Heart left ventricle (tissue), 16 donors: ENCODE measurements at regions of chr1 and their contacts with region 1.

Region 1: GRCh38 chr1:225652729-225653462 is at the start of gene ENAH:
- DNase-seq: peak; percentile 88 to 91 (median 89)
- ATAC-seq: peak; percentile 68 to 93 (median 87)
- H3K4me3 ChIP-seq: peak within 1 kb of the TSS; percentile 80 to 99 (median 92)
- H3K27ac ChIP-seq: peak within 1 kb of the TSS; percentile 92 to 100 (median 96)
- H3K4me1 ChIP-seq: peaks cover 0 to 65% (median 37%) of the 10 kb centered on the region in 12 donors
- H3K27me3 ChIP-seq: peaks cover 0 to 6% (median 0%) of the 10 kb centered on the region in 9 donors
- CTCF ChIP-seq: no peak
- POLR2A ChIP-seq: peak; percentile 28 to 54
- total RNA-seq, gene ENAH: 54.3 to 183 (median 97.6) TPM

Region 2: DNA sequence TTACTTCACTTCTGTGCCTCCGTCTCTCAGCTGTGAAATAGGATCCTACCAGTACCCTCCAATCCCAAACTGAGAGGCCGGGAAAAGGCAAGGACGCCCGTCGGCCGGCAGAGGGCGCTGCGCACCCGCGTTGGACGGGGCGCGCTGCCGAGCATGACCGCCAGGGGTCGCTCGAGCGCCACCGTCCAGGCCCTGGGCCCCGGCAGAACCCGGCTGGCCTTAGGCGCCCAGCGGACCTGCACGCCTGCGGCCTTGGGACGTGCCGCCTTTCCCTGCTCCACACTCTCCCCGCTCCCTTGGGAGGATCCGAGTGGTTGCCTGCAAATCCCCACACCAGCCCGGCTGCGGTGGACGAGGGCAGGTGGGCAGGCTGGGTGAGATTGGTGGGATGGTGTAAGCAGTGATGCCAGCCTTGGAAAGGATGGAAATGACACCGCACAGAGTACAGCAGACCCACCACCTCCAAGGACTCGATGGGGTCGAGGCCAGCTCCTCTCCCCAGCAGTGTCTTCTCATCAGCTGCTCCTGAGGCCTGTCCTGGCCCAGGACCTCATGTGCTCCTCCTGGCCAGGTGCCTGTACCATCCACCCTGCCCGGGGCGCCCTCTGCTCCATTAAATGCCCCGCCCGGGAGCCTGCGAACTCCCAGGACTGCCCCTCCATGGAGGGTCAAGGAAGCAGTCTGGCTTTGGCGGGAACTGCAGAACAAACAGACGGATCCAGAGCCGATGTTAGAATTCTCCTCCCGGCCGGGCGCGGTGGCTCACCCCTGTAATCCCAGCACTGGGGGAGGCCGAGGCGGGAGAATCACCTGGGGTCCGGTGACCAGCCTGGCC is 177.7 kb before region 1 on chr1:
- intact Hi-C with region 1: loop called in 6 of 10 experiments (anchors 5 to 10 kb)
- DNase-seq: peak; percentile 62 to 88 (median 66)
- ATAC-seq: peak; percentile 69 to 91 (median 88)
- H3K4me3 ChIP-seq: peak overlapping the region in 5 of 12 donors; percentile 10 to 35 (median 26)
- H3K27ac ChIP-seq: peak overlapping the region in 1 of 12 donors; percentile 13
- H3K4me1 ChIP-seq: peaks cover 0 to 11% (median 5%) of the 10 kb centered on the region in 12 donors
- H3K27me3 ChIP-seq: no peaks in the 10 kb centered on the region
- CTCF ChIP-seq: peak in 11 of 12 donors; percentile 100
- POLR2A ChIP-seq: no peak

Region 3: GRCh38 chr1:225554216-225554812 is 98.6 kb before region 1 on chr1:
- intact Hi-C with region 1: loop called in 2 of 10 experiments (anchors 5 to 10 kb)
- DNase-seq: no peak
- ATAC-seq: peak in 1 of 4 donors; percentile 43
- H3K4me3 ChIP-seq: no peak overlapping the region
- H3K27ac ChIP-seq: no peak overlapping the region
- H3K4me1 ChIP-seq: peaks cover 0 to 24% (median 5%) of the 10 kb centered on the region in 12 donors
- H3K27me3 ChIP-seq: no peaks in the 10 kb centered on the region
- CTCF ChIP-seq: peak; percentile 39 to 73 (median 60)
- POLR2A ChIP-seq: no peak

Region 4: GRCh38 chr1:225578251-225578950 is 74.5 kb before region 1 on chr1:
- intact Hi-C with region 1: loop called in 6 of 10 experiments (anchors 5 to 10 kb)
- DNase-seq: no peak
- ATAC-seq: no peak
- H3K4me3 ChIP-seq: no peak overlapping the region
- H3K27ac ChIP-seq: peak overlapping the region in 6 of 12 donors; percentile 2 to 69 (median 14)
- H3K4me1 ChIP-seq: peaks cover 0 to 66% (median 37%) of the 10 kb centered on the region in 12 donors
- H3K27me3 ChIP-seq: no peaks in the 10 kb centered on the region
- CTCF ChIP-seq: no peak
- POLR2A ChIP-seq: no peak

Region 5: GRCh38 chr1:225694151-225694603 is 41.3 kb after region 1 on chr1:
- intact Hi-C with region 1: loop called in 2 of 10 experiments (anchors 5 kb)
- DNase-seq: peak in 4 of 5 donors; percentile 41 to 65 (median 54)
- ATAC-seq: peak; percentile 90 to 98 (median 94)
- H3K4me3 ChIP-seq: no peak overlapping the region
- H3K27ac ChIP-seq: peak overlapping the region in 9 of 12 donors; percentile 14 to 78 (median 52)
- H3K4me1 ChIP-seq: peaks cover 0 to 76% (median 37%) of the 10 kb centered on the region in 12 donors
- H3K27me3 ChIP-seq: no peaks in the 10 kb centered on the region
- CTCF ChIP-seq: no peak
- POLR2A ChIP-seq: no peak

Region 6: GRCh38 chr1:225712391-225712790 is 59.5 kb after region 1 on chr1:
- intact Hi-C with region 1: no loop called
- DNase-seq: no peak
- ATAC-seq: no peak
- H3K4me3 ChIP-seq: no peak overlapping the region
- H3K27ac ChIP-seq: no peak overlapping the region
- H3K4me1 ChIP-seq: no peaks in the 10 kb centered on the region
- H3K27me3 ChIP-seq: no peaks in the 10 kb centered on the region
- CTCF ChIP-seq: no peak
- POLR2A ChIP-seq: no peak

Region 7: GRCh38 chr1:225766967-225767633 is 114.2 kb after region 1 on chr1:
- intact Hi-C with region 1: loop called in 9 of 10 experiments (anchors 2 to 5 kb)
- DNase-seq: peak in 4 of 5 donors; percentile 40 to 70 (median 57)
- ATAC-seq: peak; percentile 32 to 65 (median 54)
- H3K4me3 ChIP-seq: no peak overlapping the region
- H3K27ac ChIP-seq: peak overlapping the region; percentile 55 to 89 (median 79)
- H3K4me1 ChIP-seq: peaks cover 8 to 87% (median 63%) of the 10 kb centered on the region in 12 donors
- H3K27me3 ChIP-seq: no peaks in the 10 kb centered on the region
- CTCF ChIP-seq: no peak
- POLR2A ChIP-seq: no peak